Astrocyte of the cerebellum (primary cell): ENCODE measurements at regions of chr14 and their contacts with region 1.

Region 1: DNA sequence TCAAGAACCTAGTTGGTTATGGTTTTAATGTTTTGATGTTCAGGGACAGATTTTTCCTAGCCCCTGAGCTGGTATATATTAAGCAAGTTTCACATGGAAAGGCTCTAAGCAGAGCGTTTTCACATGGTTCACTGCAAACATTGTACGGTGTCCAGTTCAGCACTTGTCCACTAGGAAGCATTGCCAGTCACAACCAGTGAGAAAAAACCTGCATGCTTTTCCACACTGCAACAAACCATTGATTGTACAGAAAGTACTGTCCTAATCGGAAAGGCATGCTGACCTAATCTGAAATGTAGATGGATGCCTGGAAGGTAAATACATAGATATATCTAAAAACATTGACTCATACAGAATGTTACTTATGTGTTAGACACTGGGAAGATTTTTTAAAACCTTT is 25.0 kb upstream of the NPAS3 start:
- DNase-seq: no peak
- H3K4me3 ChIP-seq: no peak overlapping the region
- CTCF ChIP-seq: peak; percentile 62

Region 2: DNA sequence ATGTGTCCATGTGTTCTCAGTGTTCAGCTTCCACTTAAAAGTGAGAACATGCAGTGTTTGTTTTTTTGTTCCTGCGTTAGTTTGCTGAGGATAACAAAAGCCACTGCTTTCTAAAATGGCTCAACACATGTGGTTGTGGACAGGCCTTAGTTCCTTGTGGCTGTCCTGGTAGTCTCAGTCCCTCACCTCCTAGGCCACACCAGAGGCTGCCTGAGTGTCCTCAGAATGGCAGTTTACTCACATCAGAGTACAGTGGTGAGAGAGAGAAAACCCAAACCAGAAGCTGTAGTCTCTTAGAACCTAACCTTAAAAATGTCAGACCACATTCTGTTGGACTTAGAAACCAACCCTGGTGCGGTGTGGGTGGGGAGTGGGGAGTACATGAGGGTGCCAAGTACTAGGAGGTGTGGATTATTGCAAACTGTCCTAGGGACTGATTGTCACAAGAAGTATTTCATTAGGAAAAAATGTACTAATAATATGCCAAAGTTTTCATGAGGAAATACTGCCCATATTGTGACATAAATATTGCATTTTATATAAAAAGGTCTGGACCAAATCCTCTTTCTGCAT is 55.3 kb after region 1 on chr14:
- in situ Hi-C with region 1: no loop called
- DNase-seq: no peak
- H3K4me3 ChIP-seq: no peak overlapping the region
- CTCF ChIP-seq: no peak

Region 3: DNA sequence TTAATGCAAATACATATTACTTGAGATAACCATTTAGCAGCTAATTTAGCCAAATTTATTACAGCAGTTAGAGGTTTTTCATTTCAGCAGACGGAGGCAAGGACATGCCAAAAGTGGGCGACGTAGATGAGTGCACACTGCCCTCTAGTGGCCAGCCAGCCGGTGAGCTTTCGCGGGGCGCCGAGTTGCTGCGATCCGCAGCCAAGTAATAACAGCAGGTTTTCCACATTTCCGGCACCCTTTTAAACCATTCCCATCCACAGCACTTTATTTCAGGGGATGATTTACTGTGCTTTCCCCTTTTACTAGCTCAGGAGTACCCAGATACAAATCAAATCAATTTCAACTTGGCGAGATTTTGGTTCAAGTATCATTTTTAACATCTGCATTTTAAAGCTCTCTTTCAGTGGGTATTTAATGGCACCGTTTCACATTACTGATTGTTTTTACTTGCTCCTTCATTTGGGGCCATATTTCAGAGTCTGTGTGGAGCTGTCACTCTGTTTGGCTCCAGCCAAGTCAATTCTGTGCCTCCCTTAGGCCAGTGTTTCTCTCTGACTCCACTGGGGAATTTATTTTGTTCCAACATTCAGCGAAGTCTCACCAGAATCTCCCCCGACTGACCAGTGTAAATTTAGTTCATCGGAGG is 879.1 kb after region 1 on chr14:
- in situ Hi-C with region 1: loop called (anchors 25 kb)
- DNase-seq: peak; percentile 74
- H3K4me3 ChIP-seq: no peak overlapping the region
- CTCF ChIP-seq: peak; percentile 90